ENCODE measurements at regions of chr3 and their contacts with region 1.

Region 1: DNA sequence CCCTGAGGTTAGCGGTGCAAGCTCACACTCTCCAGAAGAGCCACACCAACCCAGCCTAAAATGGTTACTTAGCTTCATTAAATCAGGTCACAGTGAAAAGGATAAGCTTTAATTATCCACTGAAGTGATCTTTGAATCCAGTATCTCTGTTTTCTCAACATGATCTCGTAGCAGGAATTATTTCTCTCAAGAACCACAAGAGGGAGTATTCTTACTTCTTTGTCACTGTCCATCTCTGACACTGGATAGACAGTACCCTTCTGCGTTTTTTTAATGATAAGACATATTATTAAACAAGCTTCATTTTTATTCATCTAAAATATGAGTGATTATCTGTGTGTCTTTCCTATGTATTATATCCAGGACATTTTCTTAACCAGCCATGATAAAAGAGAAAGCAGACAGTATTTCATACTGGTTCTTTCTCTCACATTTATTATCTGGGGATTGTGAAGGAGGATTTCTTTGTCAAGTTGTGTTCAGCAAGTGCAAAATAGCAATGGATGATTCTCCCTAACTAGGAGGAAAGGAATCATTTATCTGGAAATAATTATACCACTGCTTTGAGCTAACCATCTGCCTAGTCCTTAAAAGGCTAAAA is 105.4 kb upstream of the CCDC54 start:
- DNase-seq: peak in 1 of 2 experiments; percentile 70
- H3K4me3 ChIP-seq: no peak overlapping the region
- H3K4me1 ChIP-seq: no peaks in the 10 kb centered on the region
- H3K27me3 ChIP-seq: no peaks in the 10 kb centered on the region

Region 2: GRCh38 chr3:106877627-106878026 is 394.3 kb before region 1 on chr3:
- in situ Hi-C with region 1: no loop called
- DNase-seq: no peak
- H3K4me3 ChIP-seq: no peak overlapping the region
- H3K4me1 ChIP-seq: peaks cover 3% of the 10 kb centered on the region
- H3K27me3 ChIP-seq: no peaks in the 10 kb centered on the region

Region 3: DNA sequence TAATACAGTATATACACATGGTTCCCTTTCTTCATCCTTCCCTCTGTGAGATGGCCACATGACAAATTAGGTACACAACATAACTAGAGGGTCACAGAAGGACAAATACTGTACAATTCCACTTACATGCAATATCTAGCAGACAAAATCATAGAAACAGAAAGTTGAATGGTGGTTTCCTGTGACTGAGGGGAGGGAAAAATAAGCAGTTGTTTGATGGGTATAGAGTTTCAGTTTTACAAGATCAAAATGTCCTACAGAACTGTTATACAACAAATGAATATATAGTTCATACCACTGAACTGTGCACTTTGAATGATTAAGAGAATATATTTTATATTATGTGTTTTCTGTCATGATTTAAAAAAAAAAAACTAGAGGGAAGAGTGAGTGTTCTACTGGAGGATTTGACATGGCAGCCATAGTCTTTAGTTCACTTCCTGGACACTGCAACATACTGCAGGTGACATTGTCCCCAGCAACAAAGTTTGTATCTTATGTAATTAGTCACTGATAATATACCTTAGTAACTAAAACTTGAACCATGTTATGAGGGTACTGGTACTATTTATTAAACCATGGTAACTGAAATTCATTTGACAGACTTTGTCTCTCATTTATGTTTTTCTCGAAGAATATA is 142.6 kb after region 1 on chr3:
- in situ Hi-C with region 1: loop called (anchors 10 kb)
- DNase-seq: no peak
- H3K4me3 ChIP-seq: no peak overlapping the region
- H3K4me1 ChIP-seq: peaks cover 2% of the 10 kb centered on the region; the same call in 1 of the 2 replicates
- H3K27me3 ChIP-seq: no peaks in the 10 kb centered on the region

Region 4: DNA sequence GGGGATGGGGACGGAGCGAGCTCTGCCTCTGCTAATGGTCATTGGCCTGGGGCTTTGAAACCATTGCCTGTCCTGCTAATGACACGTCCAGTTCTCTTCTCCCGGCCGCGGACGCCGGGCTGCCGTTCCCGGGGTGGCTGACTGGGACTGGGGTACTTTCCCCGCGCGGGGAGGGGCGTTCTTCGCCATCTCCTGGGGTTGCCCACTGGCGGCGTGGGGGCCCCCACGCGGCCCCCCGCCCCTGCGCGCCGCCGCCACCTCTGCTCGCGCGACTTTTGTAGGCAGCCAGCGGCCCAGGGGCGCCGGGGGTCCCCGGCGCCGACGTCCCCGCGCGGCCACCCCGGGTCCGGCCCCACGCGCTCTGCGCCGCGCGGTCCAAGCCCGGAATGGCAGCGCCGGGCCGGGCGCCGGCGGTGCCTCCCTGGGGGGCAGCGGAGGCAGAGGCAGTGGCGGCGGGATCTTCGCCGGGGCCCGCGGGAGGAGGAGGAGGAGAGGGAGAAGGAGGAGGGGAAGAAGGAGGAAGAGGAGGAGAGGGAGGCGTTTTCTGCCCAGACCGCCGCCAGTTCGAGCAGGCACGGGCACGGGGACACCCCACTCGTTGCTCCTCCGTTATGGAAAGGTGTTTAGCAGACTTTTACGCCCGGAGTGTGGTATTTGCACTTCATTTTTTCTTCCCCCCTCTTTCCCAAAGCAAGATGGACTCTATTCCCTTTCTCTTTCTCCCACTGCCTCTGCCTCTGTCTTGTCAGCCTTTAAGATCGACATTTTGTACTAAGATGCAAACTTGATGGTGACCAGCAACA is 253.2 kb after region 1 on chr3:
- in situ Hi-C with region 1: loop called (anchors 25 kb)
- DNase-seq: peak; percentile 33 to 72
- H3K4me3 ChIP-seq: peak overlapping the region; percentile 87
- H3K4me1 ChIP-seq: peaks cover 10% of the 10 kb centered on the region
- H3K27me3 ChIP-seq: no peaks in the 10 kb centered on the region

Region 5: GRCh38 chr3:107825601-107826000 is 553.7 kb after region 1 on chr3:
- in situ Hi-C with region 1: no loop called
- DNase-seq: no peak
- H3K4me3 ChIP-seq: no peak overlapping the region
- H3K4me1 ChIP-seq: no peaks in the 10 kb centered on the region
- H3K27me3 ChIP-seq: no peaks in the 10 kb centered on the region